Activated naive CD4-positive, alpha-beta T cell treated with anti-CD3 and anti-CD28 coated beads, Interleukin-2, amount 10 ng/mL, durations not matched to agents 7 days and 5 days (primary cell): ENCODE measurements at regions of chr3 and their contacts with region 1.

Region 1: GRCh38 chr3:155701882-155702465 is 42.9 kb downstream of the PLCH1 start:
- DNase-seq: no peak
- H3K4me3 Mint-ChIP-seq: no peak overlapping the region
- H3K27ac Mint-ChIP-seq: no peak overlapping the region
- H3K4me1 Mint-ChIP-seq: no peaks in the 10 kb centered on the region
- H3K27me3 Mint-ChIP-seq: peaks cover 3% of the 10 kb centered on the region

Region 2: DNA sequence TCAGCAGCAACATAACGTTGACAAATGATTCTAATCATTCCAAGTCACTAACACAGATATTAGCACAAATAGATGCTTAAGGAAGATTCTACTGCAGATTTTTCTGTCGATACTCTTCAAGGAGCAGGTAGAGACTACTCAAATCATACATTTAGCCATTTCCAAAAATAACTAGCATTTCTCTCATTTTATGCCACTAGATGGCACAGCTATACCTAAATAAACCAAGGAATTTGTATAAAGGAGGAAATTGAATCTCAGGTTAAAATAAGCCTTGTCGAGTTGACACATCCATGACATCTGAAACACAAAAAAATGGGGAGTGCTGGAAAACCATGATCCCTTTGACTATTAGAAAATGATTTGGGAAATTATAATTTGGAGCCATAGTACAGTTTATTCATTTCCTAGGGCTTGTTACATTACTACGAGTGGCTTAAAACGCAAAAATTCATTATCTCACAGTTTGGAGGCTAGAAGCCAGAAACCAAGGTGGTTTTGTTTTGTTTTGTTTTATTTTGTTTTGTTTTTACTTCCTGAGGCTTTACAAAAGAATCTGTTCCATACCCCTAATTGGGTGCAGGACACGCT is 349.0 kb before region 1 on chr3:
- CTCF ChIA-PET with region 1: interaction called, 48 read pairs
- DNase-seq: no peak
- H3K4me3 Mint-ChIP-seq: no peak overlapping the region
- H3K27ac Mint-ChIP-seq: no peak overlapping the region
- H3K4me1 Mint-ChIP-seq: no peaks in the 10 kb centered on the region
- H3K27me3 Mint-ChIP-seq: no peaks in the 10 kb centered on the region

Region 3: GRCh38 chr3:155712008-155712407 is 10.0 kb after region 1 on chr3:
- CTCF ChIA-PET with region 1: interaction called, 11 read pairs
- DNase-seq: no peak
- H3K4me3 Mint-ChIP-seq: no peak overlapping the region
- H3K27ac Mint-ChIP-seq: no peak overlapping the region
- H3K4me1 Mint-ChIP-seq: no peaks in the 10 kb centered on the region
- H3K27me3 Mint-ChIP-seq: no peaks in the 10 kb centered on the region

Region 4: GRCh38 chr3:155804323-155804722 is 102.3 kb after region 1 on chr3:
- CTCF ChIA-PET with region 1: no interaction called
- DNase-seq: no peak
- H3K4me3 Mint-ChIP-seq: no peak overlapping the region
- H3K27ac Mint-ChIP-seq: no peak overlapping the region
- H3K4me1 Mint-ChIP-seq: peaks cover 13% of the 10 kb centered on the region
- H3K27me3 Mint-ChIP-seq: peaks cover 6% of the 10 kb centered on the region